HAP-1 (cell line): ENCODE measurements at regions of chr1 and their contacts with region 1.

Region 1: GRCh38 chr1:56578963-56579875 is at the start of gene PLPP3:
- DNase-seq: peak; percentile 79 to 86
- H3K4me3 ChIP-seq: peak within 1 kb of the TSS; percentile 68
- H3K4me1 ChIP-seq: peaks cover 16% of the 10 kb centered on the region
- H3K27me3 ChIP-seq: no peaks in the 10 kb centered on the region

Region 2: DNA sequence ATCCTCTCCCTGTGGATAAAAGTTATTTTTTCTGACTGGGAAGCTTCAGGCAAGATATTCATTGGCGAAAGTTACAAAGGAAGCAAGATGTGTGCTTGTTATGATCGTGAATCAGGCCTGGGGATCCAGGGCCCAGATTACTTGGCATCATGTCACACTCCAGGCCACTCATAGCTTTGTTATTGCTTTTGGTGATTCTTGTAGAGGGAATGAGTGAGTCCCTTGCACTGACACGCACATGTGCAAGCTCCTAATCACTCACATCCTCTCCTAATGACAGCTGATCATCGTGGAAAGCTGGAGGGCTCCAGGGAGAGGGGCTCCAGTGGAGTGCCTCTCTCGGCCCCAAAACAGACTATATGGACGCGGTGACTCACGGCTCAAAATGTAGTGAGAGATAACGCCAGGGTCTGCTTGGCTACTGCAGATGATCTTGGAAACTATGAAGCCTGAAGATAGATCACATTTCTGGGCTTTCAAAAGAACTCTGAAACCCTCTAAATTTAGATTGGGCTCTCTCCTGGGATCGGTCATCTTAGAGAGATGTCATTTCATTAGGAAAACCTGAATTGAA is 883.0 kb before region 1 on chr1:
- in situ Hi-C with region 1: loop called (anchors 25 kb)
- DNase-seq: no peak
- H3K4me3 ChIP-seq: no peak overlapping the region
- H3K4me1 ChIP-seq: no peaks in the 10 kb centered on the region
- H3K27me3 ChIP-seq: no peaks in the 10 kb centered on the region

Region 3: DNA sequence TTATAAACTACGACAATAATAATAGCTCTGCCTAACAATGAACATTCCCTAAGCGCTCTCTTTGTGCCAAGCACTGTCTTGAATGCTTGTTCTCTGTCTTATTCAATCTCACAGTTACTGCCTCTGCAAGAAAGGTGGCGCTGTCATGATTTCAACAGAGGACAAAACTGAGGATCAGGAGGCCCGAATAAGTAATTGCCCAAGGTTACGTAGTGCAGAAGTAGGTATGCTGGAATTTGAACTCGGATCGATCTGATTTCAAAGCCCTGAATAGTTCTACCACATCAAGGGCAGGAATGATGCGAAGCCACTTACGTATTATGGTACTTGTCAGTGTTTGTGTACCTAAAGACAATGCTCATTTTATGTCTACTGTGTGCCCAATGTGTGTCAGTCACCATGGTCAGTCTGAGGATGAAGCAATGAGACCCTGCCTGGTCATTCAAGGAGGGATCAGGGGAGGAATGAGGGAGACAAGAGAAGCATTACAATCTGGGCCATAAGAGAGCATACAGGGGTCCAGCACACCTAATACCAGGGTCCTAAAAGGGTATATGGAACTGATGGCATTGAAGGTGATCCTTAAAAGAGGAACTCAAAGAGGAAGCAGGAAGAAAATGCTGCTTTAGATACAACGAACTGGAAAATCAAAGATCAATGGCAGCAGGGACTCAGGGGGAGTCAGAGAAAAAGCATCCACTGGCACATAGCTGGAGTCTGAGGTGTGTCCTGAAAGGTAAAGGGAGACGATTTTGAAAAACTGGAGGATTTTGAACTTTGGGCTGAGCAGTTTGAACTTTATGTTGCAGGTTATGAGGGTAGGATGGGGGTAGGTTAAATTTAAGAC is 389.1 kb before region 1 on chr1:
- in situ Hi-C with region 1: loop called (anchors 25 kb)
- DNase-seq: peak; percentile 33 to 57
- H3K4me3 ChIP-seq: no peak overlapping the region
- H3K4me1 ChIP-seq: no peaks in the 10 kb centered on the region
- H3K27me3 ChIP-seq: peaks cover 3% of the 10 kb centered on the region

Region 4: DNA sequence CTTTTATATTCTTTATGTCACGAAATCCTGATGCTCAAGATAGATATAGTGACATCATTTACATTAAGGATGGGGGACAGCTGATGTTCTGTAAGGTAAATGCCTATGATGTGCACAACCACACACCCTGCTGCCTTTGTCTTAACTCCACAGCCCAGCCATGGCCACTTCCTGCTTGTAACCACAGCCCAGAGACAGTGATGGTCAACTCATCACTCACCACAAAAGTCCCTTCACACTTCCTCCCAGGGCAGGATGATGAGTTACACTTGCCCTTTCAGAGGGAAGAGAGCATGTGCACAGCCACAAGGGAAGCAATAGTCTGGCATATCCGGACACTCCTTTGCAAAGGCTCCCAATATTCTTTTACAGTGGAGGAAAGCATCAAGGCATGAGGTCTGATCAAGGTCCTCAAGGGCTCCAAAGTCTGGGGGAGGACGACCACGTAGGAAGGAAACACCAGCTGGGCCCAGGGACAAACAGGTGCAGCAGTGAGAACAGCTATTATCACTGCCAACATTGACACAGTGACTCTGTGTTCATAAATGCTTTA is 53.7 kb before region 1 on chr1:
- in situ Hi-C with region 1: no loop called
- DNase-seq: no peak
- H3K4me3 ChIP-seq: no peak overlapping the region
- H3K4me1 ChIP-seq: peaks cover 23% of the 10 kb centered on the region
- H3K27me3 ChIP-seq: no peaks in the 10 kb centered on the region

Region 5: GRCh38 chr1:56864430-56864829 is 285.2 kb after region 1 on chr1:
- in situ Hi-C with region 1: no loop called
- DNase-seq: no peak
- H3K4me3 ChIP-seq: no peak overlapping the region
- H3K4me1 ChIP-seq: no peaks in the 10 kb centered on the region
- H3K27me3 ChIP-seq: no peaks in the 10 kb centered on the region